Left cardiac atrium (tissue), 4 donors: ENCODE measurements at regions of chr15 and their contacts with region 1.

Region 1: DNA sequence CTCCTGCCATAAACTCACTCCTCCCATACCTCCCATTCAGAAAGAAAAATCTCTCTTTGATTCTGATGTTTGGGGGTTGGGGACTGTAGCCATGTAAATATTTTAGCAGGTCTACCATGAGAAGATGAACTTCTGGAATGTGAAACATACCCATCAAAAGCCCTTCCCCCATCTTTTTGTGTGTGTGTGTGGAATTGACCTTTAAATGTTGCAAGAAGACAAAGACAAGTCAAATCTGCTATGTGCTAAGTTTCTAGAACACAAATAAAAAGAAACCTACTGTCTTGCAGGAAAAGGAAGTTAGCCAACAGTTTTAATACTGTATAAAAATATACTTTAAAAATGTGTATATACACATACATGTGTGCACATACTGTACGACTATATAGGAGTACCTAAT is 29.7 kb upstream of the USP50 start:
- DNase-seq: no peak
- ATAC-seq: no peak

Region 2: DNA sequence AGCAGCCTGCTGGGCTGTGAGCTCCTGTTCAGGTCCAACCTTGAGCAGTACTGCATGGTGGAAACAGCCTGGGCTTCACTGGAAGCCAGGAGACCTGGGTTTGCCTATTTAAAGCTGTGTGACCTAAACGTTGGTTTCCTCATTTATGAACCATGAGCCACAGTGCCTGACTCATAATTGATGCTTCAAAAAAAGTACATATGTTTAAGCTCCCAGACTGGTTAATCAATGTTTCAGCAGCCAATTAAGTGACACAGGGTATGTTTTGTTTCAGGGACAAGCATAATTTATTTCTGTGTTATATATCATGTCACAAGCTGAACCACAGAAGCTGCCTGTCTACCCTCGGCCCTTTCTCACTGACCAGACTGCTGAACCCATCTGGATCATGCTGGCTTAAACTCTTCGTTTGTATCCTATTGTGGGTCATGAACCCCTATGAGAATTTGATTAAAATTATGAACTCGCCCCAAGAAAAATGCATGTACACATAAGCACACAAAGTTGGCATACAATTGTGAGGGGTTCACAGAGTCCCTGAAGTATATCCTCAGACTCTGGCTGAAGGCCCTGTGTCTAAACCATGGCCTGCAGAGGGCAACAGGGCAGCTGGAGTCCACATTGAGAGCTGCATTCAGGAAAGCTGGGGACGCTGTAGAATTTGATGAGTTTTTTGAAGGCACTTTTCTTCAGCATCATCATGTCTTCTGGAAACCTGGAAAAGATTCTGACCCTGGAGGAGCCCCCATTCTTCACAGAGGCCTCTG is 334.3 kb before region 1 on chr15:
- intact Hi-C with region 1: no loop called
- DNase-seq: no peak
- ATAC-seq: no peak

Region 3: GRCh38 chr15:50519740-50520425 is 56.3 kb before region 1 on chr15:
- intact Hi-C with region 1: no loop called
- DNase-seq: no peak
- ATAC-seq: no peak

Region 4: DNA sequence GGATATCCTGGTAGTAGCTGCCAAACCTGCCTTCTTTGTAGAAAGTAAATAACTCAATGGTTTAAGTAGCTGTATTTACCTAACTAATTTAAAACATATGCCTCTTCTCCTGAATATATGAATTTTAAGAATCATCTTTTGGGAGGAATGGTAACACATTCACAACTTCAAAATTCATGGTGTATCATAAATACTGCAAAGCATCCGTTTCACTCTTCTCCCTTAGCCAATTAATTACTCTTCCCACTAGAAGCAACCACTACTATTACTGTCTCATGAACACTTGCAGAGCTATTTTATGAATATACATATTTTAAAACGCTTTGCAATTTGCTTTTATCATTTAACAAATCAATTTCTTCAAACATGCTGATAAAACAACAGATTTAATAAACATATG is 29.3 kb after region 1 on chr15:
- intact Hi-C with region 1: loop called in 1 of 2 experiments (anchors 5 kb)
- DNase-seq: no peak
- ATAC-seq: no peak

Region 5: DNA sequence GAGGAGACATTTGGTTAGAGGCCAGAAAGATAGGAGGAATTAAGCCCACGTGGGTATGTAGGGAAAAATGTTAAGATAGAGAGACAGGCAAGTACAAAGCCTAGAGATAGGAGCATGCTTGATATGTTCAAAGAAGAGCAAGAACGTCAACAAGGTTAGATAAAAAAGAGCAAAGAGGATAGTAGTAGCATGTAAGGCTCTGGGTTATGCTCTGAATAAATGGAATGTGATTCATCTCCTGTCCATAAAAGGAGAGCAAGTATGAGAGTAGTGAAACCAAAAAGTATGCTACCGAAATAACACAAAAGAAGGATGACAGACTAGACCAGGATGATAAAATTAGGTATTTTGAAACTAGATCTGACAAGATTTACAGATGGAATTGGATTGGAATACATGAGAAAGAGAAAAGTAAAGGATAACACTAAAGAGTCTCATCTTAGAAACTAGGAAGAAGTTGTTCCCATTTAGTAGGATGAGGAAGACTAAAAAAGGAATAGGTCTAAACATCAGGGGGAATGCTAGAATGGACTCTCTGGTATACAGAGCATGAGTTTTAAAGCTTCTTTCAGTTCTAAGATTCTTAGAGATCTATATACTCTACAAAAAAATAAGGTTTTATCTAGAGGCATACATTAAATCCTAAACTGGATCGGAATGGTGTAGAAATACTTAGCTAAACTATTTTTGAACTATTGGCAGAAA is 51.3 kb after region 1 on chr15:
- intact Hi-C with region 1: loop called (anchors 10 kb)
- DNase-seq: no peak
- ATAC-seq: peak; percentile 53 to 85

Region 6: DNA sequence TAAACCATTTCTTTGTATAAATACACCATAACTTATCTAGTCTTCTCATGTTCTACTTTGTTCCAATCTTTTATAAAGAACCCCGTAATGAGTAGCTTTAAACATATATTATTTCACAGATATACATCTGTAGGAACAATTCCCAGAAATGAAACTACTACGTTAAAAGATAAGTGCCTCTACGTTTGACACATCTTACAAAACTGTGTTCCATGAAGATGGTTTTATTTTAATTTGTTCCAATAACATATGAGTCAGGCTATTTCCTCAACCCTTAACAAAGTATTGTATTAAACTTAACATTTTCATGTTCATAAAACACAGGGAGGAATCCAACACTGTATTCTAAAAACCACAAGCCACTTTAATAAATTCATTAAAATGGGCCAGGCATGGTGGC is 57.5 kb after region 1 on chr15:
- intact Hi-C with region 1: loop called (anchors 10 kb)
- DNase-seq: no peak
- ATAC-seq: no peak